ENCODE measurements at regions of chr3 and their contacts with region 1.

Region 1: DNA sequence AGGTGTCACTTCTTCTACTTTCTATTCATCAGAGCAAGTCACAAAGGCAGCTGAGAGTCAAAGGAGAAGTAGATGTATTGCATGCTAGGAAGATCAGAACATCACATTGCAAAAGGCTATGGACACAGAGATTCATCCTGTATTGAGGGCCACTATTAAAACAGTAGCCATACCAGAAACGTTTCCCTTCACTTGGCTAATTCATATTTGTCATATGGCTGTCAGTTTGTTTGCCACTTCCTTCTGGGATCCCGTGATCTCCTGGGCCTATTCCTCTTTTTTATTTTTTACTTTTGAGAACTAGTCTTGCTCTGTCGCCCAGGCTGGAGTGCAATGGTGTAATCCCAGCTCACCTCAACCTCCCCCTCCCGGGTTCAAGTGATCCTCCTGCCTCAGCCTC is 184.0 kb upstream of the SATB1 start:
- DNase-seq: no peak
- H3K27ac ChIP-seq: no peak overlapping the region
- CTCF ChIP-seq: no peak

Region 2: GRCh38 chr3:17974206-17974841 is 634.9 kb before region 1 on chr3:
- CTCF ChIA-PET with region 1: interaction called, 12 read pairs
- POLR2A ChIA-PET with region 1: no interaction called
- DNase-seq: peak; percentile 0
- H3K27ac ChIP-seq: no peak overlapping the region
- CTCF ChIP-seq: no peak